Posterior cingulate gyrus (tissue), 11 donors: ENCODE measurements at regions of chr2 and their contacts with region 1.

Region 1: GRCh38 chr2:100562732-100563720 is at the start of gene PDCL3:
- DNase-seq: peak; percentile 87 to 99 (median 92)

Region 2: GRCh38 chr2:100416935-100417710 is 145.9 kb before region 1 on chr2 and contains the start of gene CHST10:
- intact Hi-C with region 1: loop called (anchors 1 kb)
- DNase-seq: peak in 9 of 10 donors; percentile 40 to 93 (median 56)

Region 3: DNA sequence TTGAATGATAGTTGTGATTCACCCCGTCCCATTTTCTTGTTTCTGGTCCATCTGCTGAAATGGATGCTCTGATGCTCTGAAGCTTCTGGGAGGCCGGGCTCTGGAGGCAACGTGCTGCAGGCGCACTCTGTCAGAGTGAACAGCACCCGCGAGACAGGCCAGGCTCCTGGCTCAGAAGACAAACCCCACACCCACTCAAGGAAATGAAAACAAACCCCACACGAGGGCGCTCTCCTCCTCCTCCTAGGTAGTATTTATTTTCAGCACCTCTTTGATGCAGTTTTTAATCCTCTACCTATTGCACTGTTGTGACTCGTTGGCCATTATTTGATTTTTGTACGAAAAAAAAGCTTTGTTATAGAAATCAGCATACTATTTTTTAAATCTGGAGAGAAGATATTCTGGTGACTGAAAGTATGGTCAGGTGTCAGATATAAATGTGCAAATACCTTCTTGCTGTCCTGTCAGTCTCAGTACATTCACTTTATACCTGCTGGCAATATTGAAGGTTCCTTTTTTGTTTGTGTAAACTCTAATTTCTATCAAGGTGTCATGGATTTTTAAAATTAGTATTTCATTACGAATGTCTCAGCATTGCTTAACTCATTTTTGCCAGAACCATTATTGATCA is 135.3 kb before region 1 on chr2:
- intact Hi-C with region 1: loop called (anchors 2 kb)
- DNase-seq: peak; percentile 50 to 95 (median 74)

Region 4: DNA sequence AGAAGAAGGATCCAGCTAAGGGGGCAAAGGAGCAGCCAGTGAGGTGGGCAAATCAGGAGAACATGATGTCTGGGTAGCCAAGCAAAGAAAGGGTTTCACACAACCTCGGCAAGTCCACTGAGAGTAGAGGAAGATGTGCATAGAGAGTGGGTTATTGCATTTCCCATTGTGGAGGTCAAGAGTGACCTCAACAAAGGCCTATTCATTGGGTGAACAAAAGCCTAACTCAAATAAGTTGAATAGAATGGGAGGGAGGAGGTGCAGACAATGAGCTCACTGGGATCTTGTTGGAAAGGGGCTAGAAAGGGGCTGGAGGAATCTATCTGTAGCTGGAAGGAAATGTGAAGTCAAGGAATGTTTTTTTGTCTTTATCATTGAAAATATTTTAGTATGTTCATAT is 14.3 kb before region 1 on chr2:
- intact Hi-C with region 1: loop called (anchors 2 kb)
- DNase-seq: peak in 1 of 10 donors; percentile 36